Vagina (tissue), 2 donors: ENCODE measurements at regions of chr13 and their contacts with region 1.

Region 1: DNA sequence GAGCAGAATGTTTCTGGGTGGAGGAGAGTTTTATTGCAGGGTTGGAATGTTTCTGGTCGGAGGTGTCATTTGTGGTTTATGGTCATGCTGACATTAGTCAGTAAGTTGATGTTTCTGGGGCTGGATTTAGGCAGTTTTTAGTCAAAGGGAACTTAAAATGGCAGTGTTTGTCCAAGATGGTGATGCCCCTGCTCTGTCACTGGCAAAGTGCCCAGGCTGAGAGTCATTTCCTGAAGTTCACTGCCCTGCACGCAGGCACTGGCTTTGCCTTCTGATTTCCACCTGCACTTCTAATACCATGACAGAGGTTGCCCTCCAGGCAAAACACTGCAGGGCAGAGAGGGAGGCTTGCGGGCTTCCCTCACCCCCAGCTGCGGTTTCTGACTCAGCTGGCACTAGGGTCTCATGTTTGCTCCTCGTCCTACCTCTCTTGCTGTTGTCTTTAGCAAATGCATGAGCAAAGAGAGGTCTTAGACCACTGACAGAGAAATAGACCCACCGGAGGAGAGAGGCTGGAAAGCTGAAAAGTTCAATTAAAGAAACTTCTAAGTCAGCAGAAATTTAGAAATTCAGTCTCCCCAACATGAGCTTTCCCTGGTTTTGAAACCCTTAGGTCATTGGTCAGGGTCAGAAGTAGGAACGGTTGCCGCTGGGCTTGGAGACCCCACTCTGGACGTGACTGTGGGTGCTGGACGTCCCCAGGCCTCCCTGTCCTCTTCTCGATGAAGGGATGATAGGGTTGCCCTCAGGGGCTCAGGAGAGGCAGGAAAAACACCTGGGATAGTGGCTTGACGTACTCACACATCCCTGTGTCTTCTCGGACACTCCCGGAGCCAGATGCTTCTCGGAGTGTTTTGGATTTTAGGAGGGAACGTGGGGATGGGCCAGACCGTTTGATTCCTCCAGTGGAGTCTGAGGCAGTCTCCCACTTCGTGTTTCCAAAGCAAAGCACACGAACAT is 26.3 kb downstream of the TMEM255B start:
- DNase-seq: no peak
- H3K4me3 ChIP-seq: no peak overlapping the region
- H3K27ac ChIP-seq: no peak overlapping the region
- H3K4me1 ChIP-seq: no peaks in the 10 kb centered on the region
- H3K27me3 ChIP-seq: no peaks in the 10 kb centered on the region
- CTCF ChIP-seq: no peak
- POLR2A ChIP-seq: no peak

Region 2: DNA sequence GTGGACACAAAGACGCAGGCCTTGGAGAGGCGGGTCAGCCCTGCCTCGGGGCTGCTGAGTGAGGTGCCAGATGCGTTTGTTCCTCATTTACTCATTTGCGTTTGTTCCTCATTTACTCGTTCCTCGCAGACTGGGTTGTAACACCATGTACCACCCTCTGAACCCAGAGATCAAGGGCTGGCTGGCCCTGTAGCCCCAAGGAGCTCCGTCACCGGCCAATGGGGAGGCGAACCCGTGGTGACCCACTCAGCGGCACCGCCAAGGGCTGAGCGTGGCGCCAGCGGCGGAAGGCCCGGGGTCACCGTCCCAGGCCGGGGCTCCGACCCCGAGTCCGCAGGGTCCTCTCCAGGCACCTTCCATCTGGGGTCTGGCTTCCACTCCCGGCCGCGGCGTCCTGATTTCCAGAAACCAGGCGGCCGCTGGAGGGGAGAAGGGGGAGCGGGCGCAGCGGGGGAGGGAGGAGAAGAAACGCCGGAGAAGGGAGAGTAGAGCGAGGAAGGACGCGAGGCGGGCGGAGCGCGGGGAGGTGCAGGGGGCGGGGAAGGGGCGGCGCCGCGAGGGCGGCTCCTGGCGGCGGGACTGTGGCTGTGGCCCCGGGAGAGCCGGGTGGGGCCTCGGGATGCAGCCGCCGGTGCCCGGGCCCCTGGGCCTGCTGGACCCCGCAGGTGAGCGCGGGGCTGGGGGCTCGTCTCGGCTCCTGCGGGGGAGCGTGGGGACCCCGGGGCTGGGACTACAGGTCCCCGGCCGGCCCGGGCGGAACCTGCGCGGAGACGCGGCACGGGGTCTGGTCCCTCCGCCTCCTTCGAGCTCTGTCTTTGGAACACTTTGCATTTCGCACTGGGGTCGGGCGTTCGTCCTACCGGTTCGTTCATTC is 26.4 kb before region 1 on chr13 and contains the start of gene TMEM255B:
- intact Hi-C with region 1: loop called (anchors 1 kb)
- DNase-seq: no peak
- H3K4me3 ChIP-seq: peak within 1 kb of the TSS; percentile 57 to 75
- H3K27ac ChIP-seq: peak within 1 kb of the TSS; percentile 81
- H3K4me1 ChIP-seq: peaks cover 16% of the 10 kb centered on the region
- H3K27me3 ChIP-seq: no peaks in the 10 kb centered on the region
- CTCF ChIP-seq: peak in 1 of 3 experiments; percentile 59
- POLR2A ChIP-seq: peak in 1 of 2 donors; percentile 16
- total RNA-seq, gene TMEM255B: 6.4 TPM